Transverse colon (tissue), 4 donors: ENCODE measurements at regions of chr12 and their contacts with region 1.

Region 1: DNA sequence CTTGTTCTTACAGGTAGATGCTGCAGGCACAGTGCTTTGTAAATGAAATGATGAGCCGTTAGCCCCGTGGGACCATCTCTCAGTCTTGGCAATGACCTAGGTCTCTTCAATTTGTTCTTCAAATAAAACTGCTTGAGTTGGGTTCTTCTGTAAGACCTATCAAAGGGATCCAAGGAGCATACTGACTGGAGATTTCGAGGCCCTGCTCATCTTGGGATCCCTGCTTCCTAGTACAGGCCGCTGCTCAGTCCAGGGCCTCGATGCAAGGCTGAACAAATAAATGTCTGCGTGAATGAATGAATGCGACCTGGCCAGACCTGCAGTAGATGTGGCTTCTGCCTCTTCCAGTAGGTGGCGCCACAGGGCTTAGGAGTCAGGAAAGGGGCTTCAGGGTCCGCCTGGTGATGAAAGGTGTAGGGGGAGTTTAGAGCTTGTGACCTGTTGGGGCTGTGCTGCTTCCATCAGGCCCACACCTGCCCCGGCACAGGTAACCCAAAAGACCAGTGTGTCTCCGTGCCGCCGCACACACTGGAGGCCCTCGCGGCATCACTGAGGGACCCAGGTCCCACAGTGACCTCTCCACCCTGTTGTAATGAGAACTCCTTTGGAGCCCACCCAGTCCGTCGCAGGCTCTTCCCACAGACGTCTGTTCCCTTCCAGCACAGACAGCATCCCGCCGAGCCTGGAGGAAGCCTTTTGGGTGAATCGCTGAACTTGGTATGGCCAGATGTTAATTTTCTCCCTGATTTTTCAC is 4.4 kb downstream of the CACNA1C start:
- DNase-seq: peak; percentile 70
- H3K4me3 ChIP-seq: no peak overlapping the region
- H3K27ac ChIP-seq: peak overlapping the region; percentile 64 to 92 (median 84)
- H3K4me1 ChIP-seq: peaks cover 0 to 13% (median 8%) of the 10 kb centered on the region in 4 donors
- H3K27me3 ChIP-seq: peaks cover 39% of the 10 kb centered on the region
- CTCF ChIP-seq: peak; percentile 75 to 83 (median 80)
- EP300 ChIP-seq: no peak
- POLR2A ChIP-seq: no peak

Region 2: GRCh38 chr12:1500095-1500801 is 557.0 kb before region 1 on chr12:
- in situ Hi-C with region 1: no loop called
- intact Hi-C with region 1: no loop called
- DNase-seq: no peak
- H3K4me3 ChIP-seq: no peak overlapping the region
- H3K27ac ChIP-seq: no peak overlapping the region
- H3K4me1 ChIP-seq: peaks cover 0 to 34% (median 21%) of the 10 kb centered on the region in 4 donors
- H3K27me3 ChIP-seq: no peaks in the 10 kb centered on the region
- CTCF ChIP-seq: no peak
- EP300 ChIP-seq: no peak
- POLR2A ChIP-seq: no peak

Region 3: DNA sequence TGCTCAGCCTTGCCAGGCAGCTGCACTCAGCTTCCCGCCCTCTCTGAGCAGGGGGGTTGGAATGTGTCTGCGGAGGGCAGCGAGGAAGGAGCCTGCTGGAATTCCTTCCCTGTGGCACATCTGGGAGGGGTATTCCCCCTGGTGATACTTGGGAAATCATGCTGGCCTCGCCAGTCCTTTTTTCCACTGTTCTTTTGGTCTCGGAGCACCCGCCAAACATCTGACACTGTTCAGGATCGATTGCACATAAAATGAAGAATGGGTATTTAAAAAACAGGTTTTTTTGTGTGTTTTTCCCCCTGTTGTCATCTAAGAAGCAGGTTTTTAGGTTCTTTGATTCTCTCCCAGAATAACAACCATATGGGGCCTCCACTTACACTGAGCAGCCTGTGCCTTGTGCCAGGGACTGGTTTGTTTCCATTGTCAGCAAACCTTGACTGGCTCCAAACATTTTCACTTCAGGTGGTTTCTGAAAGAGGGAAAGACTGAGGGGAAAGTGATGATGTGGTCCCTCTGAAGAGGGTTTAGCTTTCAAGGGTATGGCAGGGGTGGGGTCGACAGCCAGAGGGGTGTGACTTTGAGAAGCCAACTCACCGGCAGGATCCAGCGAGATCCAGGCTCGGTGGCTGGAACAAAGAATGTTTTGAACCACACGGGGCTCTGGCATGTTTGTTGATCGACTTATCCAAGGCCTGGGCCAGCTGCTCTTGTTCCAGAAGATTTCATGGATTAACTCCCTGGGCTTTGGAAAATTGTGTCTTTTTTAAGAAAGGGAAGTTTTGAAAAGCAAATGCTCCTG is 210.7 kb after region 1 on chr12:
- in situ Hi-C with region 1: loop called in 1 of 4 experiments (anchors 10 kb)
- intact Hi-C with region 1: loop called (anchors 5 kb)
- DNase-seq: no peak
- H3K4me3 ChIP-seq: no peak overlapping the region
- H3K27ac ChIP-seq: peak overlapping the region; percentile 70 to 84 (median 78)
- H3K4me1 ChIP-seq: peaks cover 25 to 56% (median 44%) of the 10 kb centered on the region in 4 donors
- H3K27me3 ChIP-seq: no peaks in the 10 kb centered on the region
- CTCF ChIP-seq: no peak
- EP300 ChIP-seq: no peak
- POLR2A ChIP-seq: no peak

Region 4: GRCh38 chr12:2273288-2273687 is 216.1 kb after region 1 on chr12:
- in situ Hi-C with region 1: loop called in 1 of 4 experiments (anchors 10 kb)
- intact Hi-C with region 1: loop called (anchors 5 kb)
- DNase-seq: no peak
- H3K4me3 ChIP-seq: no peak overlapping the region
- H3K27ac ChIP-seq: peak overlapping the region; percentile 11 to 78 (median 28)
- H3K4me1 ChIP-seq: peaks cover 9 to 24% (median 20%) of the 10 kb centered on the region in 4 donors
- H3K27me3 ChIP-seq: no peaks in the 10 kb centered on the region
- CTCF ChIP-seq: peak in 1 of 5 experiments; percentile 19
- EP300 ChIP-seq: no peak
- POLR2A ChIP-seq: no peak

Region 5: GRCh38 chr12:2284857-2285256 is 227.6 kb after region 1 on chr12:
- in situ Hi-C with region 1: loop called in 3 of 4 experiments (anchors 5 to 10 kb)
- intact Hi-C with region 1: no loop called
- DNase-seq: peak; percentile 83
- H3K4me3 ChIP-seq: no peak overlapping the region
- H3K27ac ChIP-seq: peak overlapping the region; percentile 70 to 84 (median 74)
- H3K4me1 ChIP-seq: peaks cover 20 to 61% (median 28%) of the 10 kb centered on the region in 4 donors
- H3K27me3 ChIP-seq: no peaks in the 10 kb centered on the region
- CTCF ChIP-seq: peak; percentile 59 to 68 (median 64)
- EP300 ChIP-seq: no peak
- POLR2A ChIP-seq: no peak

Region 6: DNA sequence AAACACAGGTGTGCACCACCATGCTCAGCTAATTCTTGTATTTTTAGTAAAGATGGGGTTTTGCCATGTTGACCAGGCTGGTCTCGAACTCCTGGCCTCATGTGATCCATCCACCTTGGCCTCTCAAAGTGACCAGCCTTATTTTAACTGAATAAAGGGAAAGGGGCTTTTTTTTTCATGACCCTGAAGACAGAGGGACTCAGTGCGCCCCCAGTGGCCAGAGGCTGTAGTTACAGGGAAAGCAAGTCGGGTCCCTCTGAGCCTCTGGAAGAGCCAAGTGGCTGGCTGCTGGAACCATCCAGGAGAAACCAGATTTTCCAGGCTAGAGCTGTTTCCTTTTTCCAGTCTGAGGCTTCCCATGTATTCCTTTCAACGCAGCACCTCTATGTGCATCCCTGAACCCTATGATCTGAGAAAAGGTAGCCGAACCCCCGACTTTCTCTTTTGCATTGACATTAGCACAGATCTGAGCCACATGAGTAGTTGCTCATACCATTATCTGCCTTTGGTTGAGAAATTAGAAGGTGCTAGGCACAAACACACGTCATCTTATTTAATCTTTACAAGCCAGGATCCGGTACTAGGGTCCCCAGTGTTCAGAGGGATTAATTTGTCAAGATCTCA is 338.2 kb after region 1 on chr12:
- in situ Hi-C with region 1: loop called in 1 of 4 experiments (anchors 25 kb)
- intact Hi-C with region 1: no loop called
- DNase-seq: peak; percentile 47
- H3K4me3 ChIP-seq: no peak overlapping the region
- H3K27ac ChIP-seq: peak overlapping the region; percentile 42 to 70 (median 68)
- H3K4me1 ChIP-seq: peaks cover 3 to 24% (median 5%) of the 10 kb centered on the region in 4 donors
- H3K27me3 ChIP-seq: no peaks in the 10 kb centered on the region
- CTCF ChIP-seq: peak; percentile 68 to 88 (median 81)
- EP300 ChIP-seq: no peak
- POLR2A ChIP-seq: no peak

Region 7: GRCh38 chr12:2550561-2551411 is 493.6 kb after region 1 on chr12:
- in situ Hi-C with region 1: loop called in 1 of 4 experiments (anchors 25 kb)
- intact Hi-C with region 1: no loop called
- DNase-seq: no peak
- H3K4me3 ChIP-seq: no peak overlapping the region
- H3K27ac ChIP-seq: peak overlapping the region in 1 of 4 donors; percentile 30
- H3K4me1 ChIP-seq: no peaks in the 10 kb centered on the region
- H3K27me3 ChIP-seq: no peaks in the 10 kb centered on the region
- CTCF ChIP-seq: no peak
- EP300 ChIP-seq: no peak
- POLR2A ChIP-seq: no peak

Region 8: GRCh38 chr12:2583091-2583497 is 525.9 kb after region 1 on chr12:
- in situ Hi-C with region 1: loop called in 3 of 4 experiments (anchors 10 to 25 kb)
- intact Hi-C with region 1: loop called (anchors 10 kb)
- DNase-seq: peak; percentile 70
- H3K4me3 ChIP-seq: peak overlapping the region in 1 of 4 donors; percentile 14
- H3K27ac ChIP-seq: peak overlapping the region in 3 of 4 donors; percentile 15 to 56 (median 47)
- H3K4me1 ChIP-seq: peaks cover 5 to 31% (median 19%) of the 10 kb centered on the region in 4 donors
- H3K27me3 ChIP-seq: no peaks in the 10 kb centered on the region
- CTCF ChIP-seq: peak; percentile 74 to 92 (median 91)
- EP300 ChIP-seq: no peak
- POLR2A ChIP-seq: no peak